Caco-2 (cell line): ENCODE measurements at regions of chr9 and their contacts with region 1.

Region 1: GRCh38 chr9:21789541-21790037 is 12.8 kb upstream of the MTAP start:
- DNase-seq: peak; percentile 66 to 67
- H3K4me3 ChIP-seq: peak overlapping the region; percentile 12; the same call in 1 of the 2 replicates
- H3K4me3 Mint-ChIP-seq: peak overlapping the region; percentile 61
- H3K27ac Mint-ChIP-seq: no peak overlapping the region
- H3K4me1 ChIP-seq: peaks cover 18% of the 10 kb centered on the region
- H3K4me1 Mint-ChIP-seq: peaks cover 14% of the 10 kb centered on the region
- H3K27me3 ChIP-seq: no peaks in the 10 kb centered on the region
- H3K27me3 Mint-ChIP-seq: no peaks in the 10 kb centered on the region
- CTCF ChIP-seq: peak; percentile 50 to 59

Region 2: GRCh38 chr9:21239911-21240310 is 549.7 kb before region 1 on chr9 and contains the start of gene IFNA14:
- CTCF ChIA-PET with region 1: no interaction called
- POLR2A ChIA-PET with region 1: no interaction called
- intact Hi-C with region 1: loop called (anchors 5 kb)
- DNase-seq: no peak
- H3K4me3 ChIP-seq: no peak within 1 kb of the TSS
- H3K4me3 Mint-ChIP-seq: no peak within 1 kb of the TSS
- H3K27ac Mint-ChIP-seq: no peak within 1 kb of the TSS
- H3K4me1 ChIP-seq: no peaks in the 10 kb centered on the region
- H3K4me1 Mint-ChIP-seq: no peaks in the 10 kb centered on the region
- H3K27me3 ChIP-seq: no peaks in the 10 kb centered on the region
- H3K27me3 Mint-ChIP-seq: peaks cover 12% of the 10 kb centered on the region
- CTCF ChIP-seq: no peak
- total RNA-seq, gene IFNA14: not detected in 2 replicates

Region 3: GRCh38 chr9:21317956-21318923 is 471.3 kb before region 1 on chr9:
- CTCF ChIA-PET with region 1: no interaction called
- POLR2A ChIA-PET with region 1: no interaction called
- intact Hi-C with region 1: loop called (anchors 1 kb)
- DNase-seq: peak in 1 of 2 experiments; percentile 39
- H3K4me3 ChIP-seq: no peak overlapping the region
- H3K4me3 Mint-ChIP-seq: no peak overlapping the region
- H3K27ac Mint-ChIP-seq: no peak overlapping the region
- H3K4me1 ChIP-seq: no peaks in the 10 kb centered on the region
- H3K4me1 Mint-ChIP-seq: peaks cover 5% of the 10 kb centered on the region
- H3K27me3 ChIP-seq: no peaks in the 10 kb centered on the region
- H3K27me3 Mint-ChIP-seq: peaks cover 9% of the 10 kb centered on the region
- CTCF ChIP-seq: peak; percentile 48 to 65

Region 4: DNA sequence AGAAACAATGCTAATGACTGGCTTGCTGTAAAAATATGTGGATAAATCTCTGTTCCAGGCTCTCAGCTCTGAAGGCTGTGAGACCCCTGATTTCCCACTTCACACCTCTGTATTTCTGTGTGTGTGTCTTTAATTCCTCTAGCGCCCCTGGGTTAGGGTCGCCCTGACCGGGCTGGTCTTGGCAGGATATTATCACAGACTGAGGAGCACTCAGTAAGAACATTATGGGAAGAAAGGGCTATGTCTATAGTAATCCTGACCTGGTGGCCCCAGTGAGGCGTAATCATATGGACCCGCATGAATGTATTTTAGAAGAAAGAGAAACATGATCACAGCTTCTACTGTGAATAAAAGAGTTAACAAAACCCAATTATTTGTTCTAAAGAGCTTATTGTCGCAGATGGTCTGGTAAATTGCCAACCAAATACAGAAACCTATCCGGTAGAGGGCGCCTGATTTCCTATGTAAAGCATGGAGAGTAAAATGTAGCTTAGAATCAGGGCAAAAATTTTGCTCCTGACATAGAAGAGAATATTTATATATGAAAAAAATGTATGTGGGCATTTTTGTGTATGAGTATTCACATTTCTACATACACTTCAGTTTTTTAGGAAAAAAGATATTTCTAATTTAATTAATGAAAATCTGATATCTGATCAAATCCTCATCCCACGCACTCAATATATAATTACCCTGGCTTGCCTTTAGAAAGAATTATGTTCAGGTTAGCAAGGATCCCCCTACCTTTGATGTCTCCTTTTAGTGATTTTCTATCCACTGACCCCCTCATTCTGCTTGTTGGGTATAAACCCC is 355.2 kb before region 1 on chr9:
- CTCF ChIA-PET with region 1: interaction called, 10 read pairs
- POLR2A ChIA-PET with region 1: no interaction called
- intact Hi-C with region 1: loop called (anchors 1 kb)
- DNase-seq: peak in 1 of 2 experiments; percentile 45
- H3K4me3 ChIP-seq: no peak overlapping the region
- H3K4me3 Mint-ChIP-seq: no peak overlapping the region
- H3K27ac Mint-ChIP-seq: no peak overlapping the region
- H3K4me1 ChIP-seq: no peaks in the 10 kb centered on the region
- H3K4me1 Mint-ChIP-seq: no peaks in the 10 kb centered on the region
- H3K27me3 ChIP-seq: no peaks in the 10 kb centered on the region
- H3K27me3 Mint-ChIP-seq: peaks cover 2% of the 10 kb centered on the region
- CTCF ChIP-seq: peak; percentile 26 to 48

Region 5: GRCh38 chr9:21506626-21507484 is 282.7 kb before region 1 on chr9:
- CTCF ChIA-PET with region 1: no interaction called
- POLR2A ChIA-PET with region 1: no interaction called
- intact Hi-C with region 1: loop called (anchors 1 kb)
- DNase-seq: peak; percentile 35 to 39
- H3K4me3 ChIP-seq: no peak overlapping the region
- H3K4me3 Mint-ChIP-seq: peak overlapping the region; percentile 44
- H3K27ac Mint-ChIP-seq: no peak overlapping the region
- H3K4me1 ChIP-seq: peaks cover 50% of the 10 kb centered on the region
- H3K4me1 Mint-ChIP-seq: peaks cover 25% of the 10 kb centered on the region
- H3K27me3 ChIP-seq: no peaks in the 10 kb centered on the region
- H3K27me3 Mint-ChIP-seq: no peaks in the 10 kb centered on the region
- CTCF ChIP-seq: no peak

Region 6: GRCh38 chr9:21542787-21543186 is 246.8 kb before region 1 on chr9:
- CTCF ChIA-PET with region 1: no interaction called
- POLR2A ChIA-PET with region 1: no interaction called
- intact Hi-C with region 1: no loop called
- DNase-seq: no peak
- H3K4me3 ChIP-seq: no peak overlapping the region
- H3K4me3 Mint-ChIP-seq: no peak overlapping the region
- H3K27ac Mint-ChIP-seq: no peak overlapping the region
- H3K4me1 ChIP-seq: peaks cover 10% of the 10 kb centered on the region; the same call in 1 of the 2 replicates
- H3K4me1 Mint-ChIP-seq: no peaks in the 10 kb centered on the region
- H3K27me3 ChIP-seq: no peaks in the 10 kb centered on the region
- H3K27me3 Mint-ChIP-seq: no peaks in the 10 kb centered on the region
- CTCF ChIP-seq: no peak

Region 7: DNA sequence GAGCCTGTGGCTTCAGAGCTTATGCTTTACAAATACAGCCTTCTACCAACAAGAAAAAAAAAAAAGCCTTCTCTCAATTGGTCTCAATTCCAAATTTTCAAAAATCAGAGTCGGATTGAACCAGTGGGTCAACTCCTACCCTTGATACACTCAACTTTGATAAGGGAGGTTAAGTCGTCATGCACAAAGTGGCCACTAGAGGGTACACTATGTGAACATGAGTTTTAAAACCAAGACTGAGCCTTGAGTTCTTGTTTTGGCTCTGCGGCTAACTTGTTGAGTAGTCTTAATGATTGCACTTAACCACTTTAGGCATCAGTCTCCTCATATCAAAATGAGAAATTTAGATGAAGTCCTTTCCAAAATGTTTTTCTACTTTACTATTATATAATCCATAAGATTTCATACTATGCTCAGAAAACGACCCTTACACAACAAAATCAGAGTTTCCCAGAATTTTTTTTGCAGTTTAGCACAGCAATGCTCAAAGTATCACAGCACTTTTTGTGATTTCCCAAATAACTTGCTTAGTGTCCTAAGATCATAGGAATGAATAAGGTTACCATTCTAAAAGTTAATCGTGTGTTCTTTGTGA is 80.0 kb before region 1 on chr9:
- CTCF ChIA-PET with region 1: interaction called, 4 read pairs
- POLR2A ChIA-PET with region 1: no interaction called
- intact Hi-C with region 1: loop called (anchors 1 kb)
- DNase-seq: peak; percentile 49 to 57
- H3K4me3 ChIP-seq: no peak overlapping the region
- H3K4me3 Mint-ChIP-seq: no peak overlapping the region
- H3K27ac Mint-ChIP-seq: no peak overlapping the region
- H3K4me1 ChIP-seq: no peaks in the 10 kb centered on the region
- H3K4me1 Mint-ChIP-seq: no peaks in the 10 kb centered on the region
- H3K27me3 ChIP-seq: no peaks in the 10 kb centered on the region
- H3K27me3 Mint-ChIP-seq: no peaks in the 10 kb centered on the region
- CTCF ChIP-seq: peak; percentile 40 to 70

Region 8: DNA sequence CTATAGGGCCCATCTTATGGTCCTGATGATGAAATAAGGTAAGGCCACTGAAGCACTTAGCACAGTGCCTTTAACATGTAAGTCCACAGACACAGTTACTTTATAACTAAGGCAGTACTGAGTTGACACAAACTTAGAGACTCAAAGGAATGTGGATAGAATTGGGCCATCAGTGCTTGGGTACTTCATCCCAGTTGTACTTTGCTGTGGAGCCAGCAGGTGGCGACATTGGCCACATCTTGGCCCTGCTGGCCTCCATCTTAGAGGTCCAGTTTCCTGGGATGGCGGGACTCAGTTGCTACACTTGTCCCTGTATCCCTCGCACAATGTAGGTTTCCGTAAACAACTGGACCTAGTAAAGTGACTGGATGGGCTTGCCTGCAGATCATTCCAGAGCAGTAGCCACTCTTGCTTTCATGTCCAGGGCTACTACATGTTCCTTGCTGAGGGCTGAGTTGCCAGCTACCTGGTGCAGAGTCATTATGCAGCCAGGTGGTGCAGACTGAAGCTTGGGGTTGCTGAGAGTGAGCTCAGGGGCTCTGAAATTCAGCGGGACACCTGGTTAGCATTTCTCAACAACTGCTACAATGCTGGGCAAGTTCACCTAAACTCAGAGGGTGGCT is 23.5 kb after region 1 on chr9:
- CTCF ChIA-PET with region 1: no interaction called
- POLR2A ChIA-PET with region 1: no interaction called
- intact Hi-C with region 1: no loop called
- DNase-seq: peak; percentile 59 to 75
- H3K4me3 ChIP-seq: no peak overlapping the region
- H3K4me3 Mint-ChIP-seq: no peak overlapping the region
- H3K27ac Mint-ChIP-seq: no peak overlapping the region
- H3K4me1 ChIP-seq: no peaks in the 10 kb centered on the region
- H3K4me1 Mint-ChIP-seq: no peaks in the 10 kb centered on the region
- H3K27me3 ChIP-seq: no peaks in the 10 kb centered on the region
- H3K27me3 Mint-ChIP-seq: no peaks in the 10 kb centered on the region
- CTCF ChIP-seq: peak; percentile 74 to 77